PC-3 (cell line): ENCODE measurements at regions of chr15 and their contacts with region 1.

Region 1: GRCh38 chr15:83734487-83734886 is 80.6 kb downstream of the ADAMTSL3 start:
- DNase-seq: peak; percentile 89
- ATAC-seq: peak; percentile 65
- H3K4me3 ChIP-seq: peak overlapping the region; percentile 33; the same call in 1 of the 2 replicates
- H3K27ac ChIP-seq: peak overlapping the region; percentile 83
- H3K4me1 ChIP-seq: peaks cover 36% of the 10 kb centered on the region
- H3K27me3 ChIP-seq: no peaks in the 10 kb centered on the region
- CTCF ChIP-seq: peak; percentile 40

Region 2: DNA sequence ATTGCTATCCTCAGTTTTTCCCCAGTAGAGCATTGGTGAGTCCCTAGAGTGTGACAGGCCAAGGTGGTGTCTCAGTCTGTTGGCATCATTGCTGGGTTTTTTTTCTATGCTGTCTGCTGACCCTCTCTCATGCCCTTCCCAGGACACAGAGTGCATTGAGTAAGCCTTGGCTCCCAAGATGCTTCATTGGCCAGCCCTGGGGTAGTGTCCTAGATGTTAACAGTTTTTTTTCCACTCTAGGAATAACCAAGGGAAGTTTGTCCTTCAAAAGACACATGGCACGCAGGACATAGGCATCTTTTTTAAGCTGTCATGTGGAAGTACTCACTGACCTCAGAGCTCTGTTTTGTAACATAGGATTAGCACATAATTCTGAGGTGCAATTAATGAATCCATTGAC is 61.1 kb before region 1 on chr15:
- CTCF ChIA-PET with region 1: no interaction called
- POLR2A ChIA-PET with region 1: no interaction called
- intact Hi-C with region 1: loop called (anchors 5 kb)
- DNase-seq: no peak
- ATAC-seq: no peak
- H3K4me3 ChIP-seq: no peak overlapping the region
- H3K27ac ChIP-seq: no peak overlapping the region
- H3K4me1 ChIP-seq: no peaks in the 10 kb centered on the region
- H3K27me3 ChIP-seq: no peaks in the 10 kb centered on the region
- CTCF ChIP-seq: no peak

Region 3: DNA sequence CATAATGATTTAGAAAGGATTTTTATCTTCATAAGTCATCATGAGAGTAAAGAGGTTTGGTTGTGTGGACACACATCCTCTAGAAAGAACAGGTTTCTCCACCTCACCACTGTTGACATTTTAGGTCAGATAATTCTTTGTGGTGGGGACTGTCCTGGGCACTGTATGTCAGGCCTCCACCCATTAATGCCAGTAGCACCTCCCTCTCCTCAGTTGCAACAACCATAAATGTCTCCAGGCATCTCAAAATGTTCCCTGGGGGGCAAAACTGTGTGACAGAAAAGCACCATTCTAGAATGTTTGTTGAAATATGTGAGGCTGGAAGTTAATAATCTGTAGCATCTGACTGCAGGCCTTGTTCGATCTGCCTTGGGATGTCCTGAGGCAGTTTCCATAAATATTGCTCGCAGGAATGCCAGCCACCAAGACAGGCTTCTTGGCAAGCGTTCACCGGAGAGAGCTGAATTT is 19.5 kb after region 1 on chr15:
- CTCF ChIA-PET with region 1: no interaction called
- POLR2A ChIA-PET with region 1: no interaction called
- intact Hi-C with region 1: no loop called
- DNase-seq: peak; percentile 87
- ATAC-seq: peak; percentile 49
- H3K4me3 ChIP-seq: peak overlapping the region; percentile 17; the same call in 1 of the 2 replicates
- H3K27ac ChIP-seq: peak overlapping the region; percentile 85
- H3K4me1 ChIP-seq: peaks cover 24% of the 10 kb centered on the region
- H3K27me3 ChIP-seq: no peaks in the 10 kb centered on the region
- CTCF ChIP-seq: no peak